Activated CD4-positive, alpha-beta memory T cell treated with anti-CD3 and anti-CD28 coated beads, Interleukin-2, amount 10 ng/mL, durations not matched to agents 7 days and 5 days (primary cell): ENCODE measurements at regions of chr17 and their contacts with region 1.

Region 1: DNA sequence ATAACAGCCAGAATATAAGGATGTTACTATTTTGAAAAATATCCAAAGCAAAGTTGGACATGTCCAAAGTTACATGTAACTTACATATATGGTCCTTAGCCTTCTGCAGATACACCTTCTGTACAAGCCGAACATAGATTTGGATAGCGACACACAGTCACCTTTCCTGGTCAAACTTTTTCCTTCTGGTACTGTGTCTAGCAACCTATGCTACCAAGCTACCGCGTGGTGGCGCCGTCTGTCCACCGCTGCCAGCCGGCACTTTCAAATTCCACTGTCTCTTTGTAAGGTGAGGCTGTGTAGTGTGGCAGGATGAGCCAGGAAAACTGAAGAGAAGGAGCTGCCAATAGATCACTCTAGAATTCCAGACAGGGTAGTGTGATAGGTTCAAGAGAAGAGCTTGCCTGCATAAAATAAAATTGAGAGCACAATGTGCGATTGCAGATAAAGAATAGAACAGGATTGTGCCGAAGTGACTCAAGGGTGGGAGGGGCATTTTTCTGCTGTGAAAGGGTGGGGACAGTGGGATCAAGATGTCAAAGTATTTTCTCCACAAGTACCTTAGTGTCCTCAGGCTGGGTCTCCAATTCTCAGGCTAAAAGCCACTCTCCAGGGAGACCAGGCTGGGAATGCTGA is 366.9 kb downstream of the SLC39A11 start:
- DNase-seq: peak; percentile 64
- H3K4me3 Mint-ChIP-seq: no peak overlapping the region
- H3K27ac Mint-ChIP-seq: peak overlapping the region; percentile 96
- H3K4me1 Mint-ChIP-seq: peaks cover 65% of the 10 kb centered on the region
- H3K27me3 Mint-ChIP-seq: no peaks in the 10 kb centered on the region

Region 2: GRCh38 chr17:72556944-72557826 is 168.4 kb before region 1 on chr17:
- CTCF ChIA-PET with region 1: interaction called, 393 read pairs
- POLR2A ChIA-PET with region 1: interaction called, 15 read pairs
- DNase-seq: peak; percentile 77
- H3K4me3 Mint-ChIP-seq: no peak overlapping the region
- H3K27ac Mint-ChIP-seq: no peak overlapping the region
- H3K4me1 Mint-ChIP-seq: peaks cover 4% of the 10 kb centered on the region
- H3K27me3 Mint-ChIP-seq: no peaks in the 10 kb centered on the region

Region 3: DNA sequence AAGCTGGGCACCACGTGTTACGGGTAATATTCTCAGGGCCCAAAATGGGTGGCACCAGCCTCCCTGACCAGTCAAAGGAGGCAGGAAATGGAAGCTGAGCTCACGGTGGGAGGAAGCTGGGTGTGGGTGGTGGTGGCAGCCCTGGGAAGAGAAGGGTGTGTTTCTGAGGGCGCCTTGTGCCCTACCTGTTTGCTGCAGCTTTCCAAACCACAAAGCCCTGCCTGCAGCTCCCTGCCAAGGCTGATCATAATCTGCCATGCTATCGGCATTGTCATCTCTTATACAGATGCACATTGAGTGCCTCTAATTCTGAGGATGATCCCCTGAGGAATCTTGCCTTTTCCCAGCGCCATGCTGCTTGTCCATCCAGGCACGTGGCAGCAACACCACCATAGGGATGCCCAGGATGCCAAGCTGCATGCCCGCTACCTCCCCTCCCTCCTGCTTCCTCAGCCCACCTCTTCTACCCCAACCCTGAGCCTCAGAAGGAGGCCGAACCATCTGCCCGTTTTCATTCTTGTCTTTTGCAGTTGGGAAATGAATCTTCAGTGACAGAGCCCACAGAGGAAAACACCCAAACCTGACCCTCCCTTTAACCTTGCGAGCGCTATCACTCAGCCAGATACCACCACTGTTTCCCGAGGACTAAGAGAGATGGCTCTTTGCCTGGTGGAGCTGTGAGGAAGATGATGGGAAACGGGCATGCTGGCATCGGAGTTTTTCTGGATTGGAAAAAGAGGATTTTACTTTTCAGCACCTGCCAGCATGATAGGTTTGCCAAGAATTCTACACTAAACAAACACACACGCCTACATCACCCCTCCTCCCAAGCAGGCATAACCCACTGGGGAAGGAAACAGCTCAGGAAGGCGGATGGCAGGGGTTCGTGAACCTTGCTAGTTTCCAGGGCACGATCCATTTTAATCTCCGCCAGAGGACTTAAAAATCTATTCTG is 90.6 kb before region 1 on chr17:
- CTCF ChIA-PET with region 1: interaction called, 10 read pairs
- POLR2A ChIA-PET with region 1: interaction called, 5 read pairs
- DNase-seq: peak; percentile 51
- H3K4me3 Mint-ChIP-seq: peak overlapping the region; percentile 50
- H3K27ac Mint-ChIP-seq: peak overlapping the region; percentile 56
- H3K4me1 Mint-ChIP-seq: peaks cover 27% of the 10 kb centered on the region
- H3K27me3 Mint-ChIP-seq: no peaks in the 10 kb centered on the region

Region 4: GRCh38 chr17:72735592-72735991 is 10.0 kb after region 1 on chr17:
- CTCF ChIA-PET with region 1: interaction called, 11 read pairs
- POLR2A ChIA-PET with region 1: interaction called, 4 read pairs
- DNase-seq: no peak
- H3K4me3 Mint-ChIP-seq: no peak overlapping the region
- H3K27ac Mint-ChIP-seq: no peak overlapping the region
- H3K4me1 Mint-ChIP-seq: no peaks in the 10 kb centered on the region
- H3K27me3 Mint-ChIP-seq: no peaks in the 10 kb centered on the region

Region 5: GRCh38 chr17:73165616-73166404 is 440.3 kb after region 1 on chr17:
- CTCF ChIA-PET with region 1: interaction called, 13 read pairs
- POLR2A ChIA-PET with region 1: interaction called, 4 read pairs
- DNase-seq: no peak
- H3K4me3 Mint-ChIP-seq: peak overlapping the region; percentile 47
- H3K27ac Mint-ChIP-seq: no peak overlapping the region
- H3K4me1 Mint-ChIP-seq: peaks cover 29% of the 10 kb centered on the region
- H3K27me3 Mint-ChIP-seq: peaks cover 70% of the 10 kb centered on the region

Region 6: DNA sequence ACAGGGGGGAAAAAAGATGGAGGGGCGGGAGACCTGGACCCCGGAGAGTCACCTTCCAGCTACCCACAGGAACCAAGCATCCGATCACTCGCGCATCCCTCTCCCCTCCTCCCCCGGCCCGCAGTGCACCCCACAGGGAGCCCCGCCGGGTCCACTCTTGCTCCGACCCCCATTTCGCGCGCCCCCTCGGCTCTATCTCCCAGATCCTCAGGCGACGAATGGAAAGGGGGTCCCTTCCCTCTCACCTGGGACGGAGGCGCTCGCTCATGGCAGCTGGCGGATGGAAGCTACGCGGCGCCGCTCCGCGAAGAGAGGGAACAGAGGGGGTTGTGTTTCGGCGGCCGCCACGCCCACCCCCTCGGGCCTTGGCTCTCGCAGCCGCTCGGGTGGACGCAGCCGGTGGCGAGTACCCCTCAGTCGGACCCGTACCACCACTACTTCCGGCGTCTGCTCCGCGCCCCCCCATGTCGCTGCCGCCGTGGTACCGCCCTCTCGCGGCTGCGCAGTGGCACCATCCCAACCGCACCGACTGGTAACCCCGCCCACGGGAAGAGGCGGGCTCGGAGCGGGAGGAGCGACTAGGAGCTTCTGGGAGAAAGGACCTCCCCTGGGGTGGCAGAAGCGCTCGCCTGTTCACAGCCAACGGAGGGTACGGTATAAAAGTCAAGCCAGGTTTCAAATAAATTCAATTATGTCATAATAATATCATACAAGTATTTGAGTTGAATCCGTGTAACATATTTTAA is 506.5 kb after region 1 on chr17:
- CTCF ChIA-PET with region 1: interaction called, 22 read pairs
- POLR2A ChIA-PET with region 1: interaction called, 15 read pairs
- DNase-seq: peak; percentile 96
- H3K4me3 Mint-ChIP-seq: peak overlapping the region; percentile 90
- H3K27ac Mint-ChIP-seq: peak overlapping the region; percentile 88
- H3K4me1 Mint-ChIP-seq: peaks cover 68% of the 10 kb centered on the region
- H3K27me3 Mint-ChIP-seq: no peaks in the 10 kb centered on the region